CD4-positive, alpha-beta T cell (primary cell): ENCODE measurements at regions of chr3 and their contacts with region 1.

Region 1: GRCh38 chr3:196568246-196569002 is at the starts of genes FBXO45 and WDR53:
- DNase-seq: peak; percentile 90 to 99 (median 94)
- ATAC-seq: peak; percentile 90
- H3K4me3 ChIP-seq: peak within 1 kb of the TSS; percentile 76
- H3K4me3 Mint-ChIP-seq: peak within 1 kb of the TSS; percentile 98
- H3K27ac ChIP-seq: peak within 1 kb of the TSS; percentile 77 to 81
- H3K27ac Mint-ChIP-seq: peak within 1 kb of the TSS; percentile 97
- H3K4me1 ChIP-seq: peaks cover 47% of the 10 kb centered on the region
- H3K4me1 Mint-ChIP-seq: peaks cover 48% of the 10 kb centered on the region
- H3K27me3 ChIP-seq: no peaks in the 10 kb centered on the region
- H3K27me3 Mint-ChIP-seq: no peaks in the 10 kb centered on the region
- CTCF ChIP-seq: no peak
- total RNA-seq, gene FBXO45: 5.4 to 6.0 TPM
- total RNA-seq, gene WDR53: 18.4 to 20.9 TPM

Region 2: GRCh38 chr3:196502775-196503195 is 65.6 kb before region 1 on chr3:
- CTCF ChIA-PET with region 1: no interaction called
- POLR2A ChIA-PET with region 1: interaction called, 6 read pairs
- intact Hi-C with region 1: loop called (anchors 2 kb)
- DNase-seq: peak; percentile 36 to 88 (median 51)
- ATAC-seq: peak; percentile 62
- H3K4me3 ChIP-seq: peak overlapping the region; percentile 100
- H3K4me3 Mint-ChIP-seq: peak overlapping the region; percentile 99
- H3K27ac ChIP-seq: peak overlapping the region; percentile 85 to 86
- H3K27ac Mint-ChIP-seq: peak overlapping the region; percentile 96
- H3K4me1 ChIP-seq: peaks cover 29% of the 10 kb centered on the region
- H3K4me1 Mint-ChIP-seq: peaks cover 45% of the 10 kb centered on the region
- H3K27me3 ChIP-seq: no peaks in the 10 kb centered on the region
- H3K27me3 Mint-ChIP-seq: no peaks in the 10 kb centered on the region
- CTCF ChIP-seq: no peak

Region 3: DNA sequence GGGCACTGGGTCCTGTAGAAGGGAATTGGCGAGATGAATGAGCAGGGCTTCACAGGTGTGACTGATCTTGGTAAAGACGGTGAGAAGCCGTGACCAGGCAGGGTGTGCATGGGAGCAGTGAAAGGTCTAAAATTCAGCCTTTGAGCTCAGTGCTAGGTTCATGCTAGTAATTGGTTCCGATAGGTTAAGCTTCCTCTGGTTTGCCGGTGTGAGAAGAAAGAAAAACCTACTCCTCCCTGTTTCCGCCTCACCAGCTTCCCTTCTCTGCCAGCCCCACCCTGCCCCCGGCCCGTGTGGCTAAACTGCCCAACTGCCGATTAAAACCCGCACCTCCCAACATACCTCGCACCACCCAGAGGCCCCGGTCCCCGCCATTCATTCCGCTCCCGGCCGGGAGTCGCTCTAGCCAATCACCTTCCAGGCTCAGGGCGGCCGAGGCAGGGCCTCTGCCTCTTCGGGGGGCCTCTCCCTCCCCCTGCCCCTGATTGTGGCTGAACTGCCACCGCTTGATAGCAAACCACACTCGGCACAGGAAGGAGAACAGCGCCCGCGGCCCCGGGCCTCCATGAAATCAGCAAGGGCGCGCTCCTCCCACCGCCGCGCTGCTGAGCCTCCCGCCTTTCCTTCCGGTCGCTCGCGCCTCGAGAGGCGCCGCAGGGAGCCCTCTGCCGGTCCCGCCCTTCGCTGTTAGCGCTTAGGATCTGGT is 63.8 kb after region 1 on chr3:
- CTCF ChIA-PET with region 1: no interaction called
- POLR2A ChIA-PET with region 1: interaction called, 16 read pairs
- intact Hi-C with region 1: no loop called
- DNase-seq: peak; percentile 72 to 96 (median 87)
- ATAC-seq: peak; percentile 83
- H3K4me3 ChIP-seq: peak overlapping the region; percentile 72
- H3K4me3 Mint-ChIP-seq: peak overlapping the region; percentile 90
- H3K27ac ChIP-seq: peak overlapping the region; percentile 90
- H3K27ac Mint-ChIP-seq: peak overlapping the region; percentile 94
- H3K4me1 ChIP-seq: peaks cover 69% of the 10 kb centered on the region
- H3K4me1 Mint-ChIP-seq: peaks cover 67% of the 10 kb centered on the region
- H3K27me3 ChIP-seq: no peaks in the 10 kb centered on the region
- H3K27me3 Mint-ChIP-seq: no peaks in the 10 kb centered on the region
- CTCF ChIP-seq: no peak

Region 4: GRCh38 chr3:196711838-196712513 is 143.6 kb after region 1 on chr3 and contains the starts of genes CEP19 and PIGX:
- CTCF ChIA-PET with region 1: no interaction called
- POLR2A ChIA-PET with region 1: interaction called, 14 read pairs
- intact Hi-C with region 1: loop called in 1 of 2 experiments (anchors 1 kb)
- DNase-seq: peak; percentile 66 to 99 (median 86)
- ATAC-seq: peak; percentile 86
- H3K4me3 ChIP-seq: peak within 1 kb of the TSS; percentile 88
- H3K4me3 Mint-ChIP-seq: peak within 1 kb of the TSS; percentile 93
- H3K27ac ChIP-seq: peak within 1 kb of the TSS; percentile 95 to 99
- H3K27ac Mint-ChIP-seq: peak within 1 kb of the TSS; percentile 94
- H3K4me1 ChIP-seq: peaks cover 29% of the 10 kb centered on the region
- H3K4me1 Mint-ChIP-seq: peaks cover 28% of the 10 kb centered on the region
- H3K27me3 ChIP-seq: no peaks in the 10 kb centered on the region
- H3K27me3 Mint-ChIP-seq: no peaks in the 10 kb centered on the region
- CTCF ChIP-seq: no peak
- total RNA-seq, gene CEP19: 0.36 to 0.64 TPM
- total RNA-seq, gene PIGX: 13.3 to 13.9 TPM

Region 5: DNA sequence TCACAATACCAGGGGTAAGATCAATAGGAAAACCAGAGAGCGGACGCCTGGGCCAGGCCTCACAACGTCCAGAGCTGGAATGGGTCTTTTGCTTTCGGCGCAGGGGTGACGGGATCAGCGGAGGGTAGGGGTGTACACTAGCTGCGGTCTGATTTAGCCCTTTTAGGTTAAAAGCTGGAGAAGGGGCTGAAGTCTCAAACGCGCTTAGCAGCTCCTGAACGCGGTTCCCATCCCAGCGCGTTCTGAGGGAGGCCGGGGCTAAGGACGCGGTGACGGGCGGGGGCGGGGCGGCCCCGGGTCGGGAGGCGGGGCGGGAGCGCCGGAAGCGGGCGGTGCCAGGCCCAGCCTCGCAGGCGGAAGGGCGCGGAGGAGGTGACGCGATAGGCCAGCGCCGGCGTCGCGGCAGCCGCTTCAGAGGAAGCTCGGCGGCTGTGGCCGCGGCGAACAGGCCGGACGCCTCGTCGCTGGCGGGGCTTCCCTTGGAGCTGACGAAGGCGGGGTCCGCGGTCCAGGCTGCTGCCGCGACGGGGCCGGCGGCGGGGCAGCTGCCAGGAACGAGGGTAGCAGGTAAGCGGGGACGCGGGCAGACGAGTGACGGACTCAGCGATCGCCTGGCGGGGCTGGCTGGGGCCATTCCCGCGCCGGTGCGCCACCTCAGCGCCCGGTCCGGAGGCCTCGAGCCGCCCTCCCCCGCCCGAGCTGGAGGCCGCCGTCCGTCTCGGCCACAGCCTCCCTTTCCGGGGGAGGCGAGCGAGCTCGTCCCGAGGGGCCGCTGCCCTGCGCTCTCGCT is 299.3 kb after region 1 on chr3 and contains the start of gene SENP5:
- CTCF ChIA-PET with region 1: no interaction called
- POLR2A ChIA-PET with region 1: interaction called, 9 read pairs
- intact Hi-C with region 1: loop called in 1 of 2 experiments (anchors 5 kb)
- DNase-seq: peak; percentile 75 to 96 (median 86)
- ATAC-seq: peak; percentile 96
- H3K4me3 ChIP-seq: peak within 1 kb of the TSS; percentile 94
- H3K4me3 Mint-ChIP-seq: peak within 1 kb of the TSS; percentile 98
- H3K27ac ChIP-seq: peak within 1 kb of the TSS; percentile 85 to 94
- H3K27ac Mint-ChIP-seq: peak within 1 kb of the TSS; percentile 93
- H3K4me1 ChIP-seq: peaks cover 31% of the 10 kb centered on the region
- H3K4me1 Mint-ChIP-seq: peaks cover 38% of the 10 kb centered on the region
- H3K27me3 ChIP-seq: no peaks in the 10 kb centered on the region
- H3K27me3 Mint-ChIP-seq: no peaks in the 10 kb centered on the region
- CTCF ChIP-seq: no peak
- total RNA-seq, gene SENP5: 62.7 to 64.7 TPM